BJ (cell line): ENCODE measurements at regions of chr7 and their contacts with region 1.

Region 1: GRCh38 chr7:6160191-6160623 is 112.2 kb downstream of the CYTH3 start:
- DNase-seq: no peak
- H3K4me3 ChIP-seq: no peak overlapping the region
- H3K27me3 ChIP-seq: no peaks in the 10 kb centered on the region
- CTCF ChIP-seq: peak; percentile 88

Region 2: DNA sequence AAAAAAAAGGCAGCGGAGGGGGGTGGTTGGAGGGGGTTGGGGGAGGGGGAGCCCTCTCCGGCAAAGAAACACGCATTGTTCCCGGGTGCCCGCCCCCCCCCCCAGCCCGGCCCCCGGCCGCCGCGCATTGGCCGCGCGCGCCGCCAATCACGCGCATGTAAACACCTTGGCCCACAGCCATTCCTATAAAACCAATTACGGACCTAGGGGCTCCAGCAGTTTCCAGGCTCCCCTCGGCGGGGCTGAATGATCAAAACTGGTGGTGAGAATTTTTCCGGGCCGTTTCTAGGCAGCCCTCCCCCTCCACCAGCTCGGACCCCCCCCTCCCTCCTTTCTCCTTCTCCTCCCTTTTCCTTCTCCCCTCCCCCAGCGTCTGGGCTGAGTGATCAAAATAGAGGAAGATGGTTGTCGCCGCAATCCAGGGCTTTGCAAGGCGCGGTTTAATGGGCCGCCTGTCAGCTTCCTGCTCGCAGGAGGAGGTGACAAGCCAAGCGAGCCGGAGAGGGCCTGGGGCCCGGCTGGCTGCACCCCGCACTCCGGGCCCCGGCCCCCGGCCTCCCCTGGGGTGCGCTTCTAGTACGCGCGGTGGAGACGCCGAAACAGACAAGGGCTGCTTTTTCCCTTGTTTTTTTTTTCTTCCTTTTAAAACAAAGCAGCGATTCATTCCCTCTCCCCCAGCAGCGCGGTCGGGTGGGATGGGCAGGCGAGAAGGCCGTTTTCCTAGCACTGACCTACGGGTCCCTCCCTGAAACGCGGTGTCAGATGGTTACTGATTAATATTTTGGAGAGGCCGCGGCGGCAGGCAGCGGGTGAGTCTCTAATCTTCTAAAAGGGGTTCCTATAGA is 736.1 kb before region 1 on chr7:
- CTCF ChIA-PET with region 1: no interaction called
- POLR2A ChIA-PET with region 1: no interaction called
- DNase-seq: peak; percentile 89
- H3K4me3 ChIP-seq: peak overlapping the region; percentile 82
- H3K27me3 ChIP-seq: no peaks in the 10 kb centered on the region
- CTCF ChIP-seq: no peak

Region 3: GRCh38 chr7:6148724-6149360 is 11.4 kb before region 1 on chr7:
- CTCF ChIA-PET with region 1: interaction called, 19 read pairs
- POLR2A ChIA-PET with region 1: no interaction called
- DNase-seq: no peak
- H3K4me3 ChIP-seq: no peak overlapping the region
- H3K27me3 ChIP-seq: no peaks in the 10 kb centered on the region
- CTCF ChIP-seq: no peak

Region 4: DNA sequence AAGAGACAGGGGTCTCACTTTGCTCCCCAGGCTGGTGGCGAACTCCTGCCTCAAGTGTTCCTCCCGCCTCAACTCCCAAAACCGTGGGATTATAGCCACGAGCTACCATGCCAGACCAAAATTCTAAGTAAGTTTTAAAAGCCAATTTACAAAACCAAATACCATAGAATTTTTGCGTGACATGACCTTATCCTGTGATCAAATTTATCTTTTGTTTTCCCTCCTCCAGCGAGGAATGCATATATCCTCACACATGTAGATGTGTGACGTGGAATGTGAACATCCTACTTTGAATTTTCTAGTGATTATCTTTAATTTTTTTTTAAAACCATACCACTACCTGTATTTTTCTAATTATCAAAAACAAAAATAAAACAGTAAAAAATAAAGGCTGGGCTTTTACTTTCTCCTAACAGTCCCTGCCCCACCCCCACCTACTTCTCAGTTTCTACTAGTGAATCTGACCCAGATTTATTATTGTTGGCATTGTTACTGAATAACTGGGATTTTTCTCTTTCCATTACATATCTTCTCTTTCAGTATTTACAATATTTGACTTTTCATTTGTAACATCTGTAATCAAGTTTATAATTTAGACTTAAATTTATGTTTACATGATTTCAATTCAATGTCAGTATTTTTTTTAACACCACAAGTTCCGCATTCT is 86.2 kb after region 1 on chr7:
- CTCF ChIA-PET with region 1: interaction called, 12 read pairs
- POLR2A ChIA-PET with region 1: no interaction called
- DNase-seq: no peak
- H3K4me3 ChIP-seq: no peak overlapping the region
- H3K27me3 ChIP-seq: no peaks in the 10 kb centered on the region
- CTCF ChIP-seq: no peak

Region 5: DNA sequence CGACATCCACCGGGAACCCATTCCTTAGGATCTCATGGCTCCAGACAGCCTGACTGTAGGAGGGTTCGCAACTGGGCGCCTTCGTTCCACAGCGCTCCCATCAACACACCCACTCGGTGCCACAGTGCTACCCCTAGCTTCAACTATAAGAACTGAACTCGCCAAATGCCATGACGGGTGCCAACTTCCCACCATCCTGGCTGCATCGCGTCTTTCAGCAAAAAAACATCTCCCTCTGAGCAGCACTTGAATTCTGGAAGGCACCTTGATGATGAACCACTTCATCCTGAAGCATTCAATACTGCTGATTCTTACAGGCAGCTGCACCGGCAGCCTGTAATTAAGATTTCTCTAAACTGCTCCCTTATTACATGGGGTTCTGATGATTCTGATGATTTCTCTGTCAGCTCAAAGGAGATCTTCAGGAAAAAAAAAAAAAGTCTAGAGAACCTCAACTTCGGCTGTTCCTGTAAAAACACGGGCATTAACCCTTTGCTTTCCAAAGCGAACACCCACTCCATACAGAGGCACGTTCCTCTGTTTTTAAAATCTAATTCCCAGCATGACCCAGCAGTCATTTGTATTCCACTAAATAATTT is 111.0 kb after region 1 on chr7:
- CTCF ChIA-PET with region 1: interaction called, 12 read pairs
- POLR2A ChIA-PET with region 1: no interaction called
- DNase-seq: no peak
- H3K4me3 ChIP-seq: peak overlapping the region; percentile 95
- H3K27me3 ChIP-seq: no peaks in the 10 kb centered on the region
- CTCF ChIP-seq: peak; percentile 66

Region 6: GRCh38 chr7:6317797-6318438 is 157.7 kb after region 1 on chr7:
- CTCF ChIA-PET with region 1: interaction called, 85 read pairs
- POLR2A ChIA-PET with region 1: no interaction called
- DNase-seq: peak; percentile 44
- H3K4me3 ChIP-seq: no peak overlapping the region
- H3K27me3 ChIP-seq: no peaks in the 10 kb centered on the region
- CTCF ChIP-seq: 0 out of 2 replicates have a peak, but pooled peaks have one; percentile 6

Region 7: DNA sequence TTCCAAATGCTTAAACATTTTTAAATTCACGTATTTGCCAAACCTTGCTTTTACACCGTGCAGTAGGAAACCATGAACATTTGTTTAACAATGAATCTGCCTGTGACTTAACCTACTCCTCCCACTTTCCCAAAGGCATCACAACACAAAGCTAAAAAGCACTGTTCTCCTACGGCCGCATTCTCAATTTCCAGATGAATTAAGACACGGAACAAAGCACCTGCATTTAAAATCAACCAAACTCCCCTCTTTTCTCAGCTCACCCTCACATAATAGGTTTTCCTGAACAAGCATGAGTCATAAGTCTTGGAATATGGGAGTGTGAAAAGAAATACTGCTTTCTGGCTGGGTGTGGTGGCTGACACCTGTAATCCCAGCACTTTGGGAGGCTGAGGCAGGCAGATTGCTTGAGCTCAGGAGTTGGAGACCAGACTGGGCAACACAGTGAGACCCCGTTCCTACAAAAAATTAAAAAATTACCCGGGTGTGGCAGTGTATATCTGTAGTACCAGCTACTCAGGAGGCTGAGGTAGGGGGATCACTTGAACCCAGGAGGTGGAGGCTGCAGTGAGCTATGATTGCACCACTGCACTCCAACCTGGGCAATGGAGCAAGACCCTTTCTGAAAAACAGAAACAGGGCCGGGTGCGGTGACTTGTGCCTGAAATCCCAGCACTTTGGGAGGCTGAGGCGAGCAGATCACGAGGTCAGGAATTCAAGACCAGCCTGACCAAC is 163.9 kb after region 1 on chr7:
- CTCF ChIA-PET with region 1: interaction called, 85 read pairs
- POLR2A ChIA-PET with region 1: no interaction called
- DNase-seq: no peak
- H3K4me3 ChIP-seq: no peak overlapping the region
- H3K27me3 ChIP-seq: no peaks in the 10 kb centered on the region
- CTCF ChIP-seq: no peak